Left lung (tissue), 14 donors: ENCODE measurements at regions of chr18 and their contacts with region 1.

Region 1: DNA sequence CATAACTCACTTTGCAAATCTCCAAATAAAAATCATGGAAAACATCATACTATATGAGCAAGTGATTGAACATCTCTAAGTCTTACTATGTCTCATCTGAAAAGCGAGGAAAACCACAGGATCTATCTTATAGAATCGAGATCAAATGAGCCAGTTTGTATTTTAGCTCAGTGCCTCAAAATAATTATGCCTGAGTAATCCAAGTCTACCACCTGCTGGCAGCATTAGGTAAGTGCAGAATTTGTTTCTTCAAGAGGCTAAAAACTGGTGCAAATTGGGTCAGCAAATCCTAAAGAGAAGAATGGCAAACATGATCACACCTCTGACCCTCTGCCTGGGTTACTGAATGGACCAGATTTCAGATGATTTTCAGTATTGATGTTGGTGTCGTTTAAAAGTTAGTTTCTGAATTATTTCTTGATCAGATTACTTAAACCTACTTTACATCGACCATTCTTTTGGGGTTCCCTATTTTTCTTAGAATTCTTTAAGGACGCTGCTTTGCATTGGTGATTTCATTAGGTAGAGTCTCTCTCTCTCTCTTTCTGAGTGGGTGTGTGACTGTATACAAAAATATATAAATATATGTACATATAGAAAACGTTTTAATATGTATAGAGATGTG is 12.7 kb upstream of the FHOD3 start:
- DNase-seq: peak in 2 of 4 donors; percentile 46 to 71
- ATAC-seq: peak; percentile 84
- H3K4me3 ChIP-seq: no peak overlapping the region
- H3K27ac ChIP-seq: no peak overlapping the region
- H3K4me1 ChIP-seq: no peaks in the 10 kb centered on the region
- H3K27me3 ChIP-seq: peaks cover 0 to 28% of the 10 kb centered on the region in 2 donors
- CTCF ChIP-seq: peak; percentile 72 to 76

Region 2: DNA sequence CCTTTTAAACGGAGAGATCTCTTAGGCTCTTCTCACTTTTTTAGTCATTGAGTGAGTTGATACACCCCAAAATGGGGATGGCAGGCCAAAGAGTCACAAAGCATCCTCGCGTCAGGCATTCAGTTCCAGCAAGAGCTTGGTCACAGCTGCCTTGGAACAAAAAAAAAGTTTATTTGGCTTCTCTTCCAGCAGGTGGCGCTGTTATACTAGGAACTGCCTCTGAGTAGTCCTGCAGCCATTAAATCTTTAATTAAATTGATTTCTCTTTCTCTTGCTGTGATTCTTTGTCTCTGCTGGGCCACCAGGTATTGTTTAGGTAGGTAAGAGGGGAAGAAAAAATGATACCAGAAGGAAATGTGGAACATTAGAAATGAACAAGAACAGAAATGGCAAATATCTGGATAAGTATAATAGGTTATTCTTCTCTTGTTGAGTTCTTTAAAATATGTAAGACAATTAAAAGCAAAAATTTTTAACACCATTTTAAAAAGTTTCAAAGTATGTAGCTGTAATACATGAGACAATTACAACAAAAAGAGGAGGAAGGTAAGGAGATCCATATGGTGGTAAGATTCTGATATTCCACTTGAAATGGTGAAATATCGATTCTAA is 528.2 kb before region 1 on chr18:
- intact Hi-C with region 1: loop called in 1 of 2 experiments (anchors 10 kb)
- DNase-seq: peak in 2 of 4 donors; percentile 40 to 70
- ATAC-seq: peak; percentile 87
- H3K4me3 ChIP-seq: no peak overlapping the region
- H3K27ac ChIP-seq: no peak overlapping the region
- H3K4me1 ChIP-seq: no peaks in the 10 kb centered on the region
- H3K27me3 ChIP-seq: no peaks in the 10 kb centered on the region
- CTCF ChIP-seq: peak; percentile 70 to 84

Region 3: DNA sequence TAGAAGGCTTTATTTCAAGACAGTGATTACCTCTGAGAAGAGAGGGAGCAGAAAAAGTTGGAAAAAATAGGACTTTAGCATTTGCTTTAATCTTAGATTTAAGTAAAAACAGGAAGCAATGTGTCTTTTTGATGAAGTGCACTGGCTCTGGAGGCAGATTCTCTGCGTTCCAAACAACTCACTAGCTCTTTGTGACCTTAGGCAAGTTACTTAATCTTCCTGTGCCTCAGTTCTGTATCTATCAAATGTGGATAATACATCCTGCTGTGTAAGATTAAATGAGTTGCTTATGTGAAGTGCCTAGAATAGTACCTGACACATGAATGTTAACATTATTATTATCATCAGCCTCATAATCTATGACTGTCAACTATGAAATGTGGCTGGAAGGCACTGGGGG is 259.8 kb before region 1 on chr18:
- intact Hi-C with region 1: loop called in 1 of 2 experiments (anchors 10 kb)
- DNase-seq: peak in 1 of 4 donors; percentile 19
- ATAC-seq: no peak
- H3K4me3 ChIP-seq: no peak overlapping the region
- H3K27ac ChIP-seq: no peak overlapping the region
- H3K4me1 ChIP-seq: no peaks in the 10 kb centered on the region
- H3K27me3 ChIP-seq: no peaks in the 10 kb centered on the region
- CTCF ChIP-seq: no peak

Region 4: DNA sequence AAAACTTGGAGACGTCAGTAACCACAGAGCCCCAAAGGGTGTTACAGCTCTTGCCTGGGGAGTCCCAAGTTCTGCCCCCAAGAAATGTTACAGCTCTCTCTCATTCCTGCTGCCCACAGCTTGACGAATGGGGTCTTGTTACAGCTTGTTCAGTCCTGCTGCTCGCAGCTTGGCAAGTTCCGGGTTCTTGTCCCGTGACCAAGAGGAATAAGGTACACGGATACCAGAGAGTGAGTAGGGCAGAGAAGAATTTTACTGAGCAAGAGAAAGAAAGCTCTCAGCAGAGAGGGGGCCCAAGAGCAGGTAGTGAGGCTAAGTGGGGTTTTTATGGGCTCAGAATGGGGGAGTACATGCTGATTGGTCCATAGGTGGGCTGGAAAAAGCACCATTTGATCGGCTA is 182.8 kb before region 1 on chr18:
- intact Hi-C with region 1: loop called in 1 of 2 experiments (anchors 10 kb)
- DNase-seq: no peak
- ATAC-seq: no peak
- H3K4me3 ChIP-seq: no peak overlapping the region
- H3K27ac ChIP-seq: no peak overlapping the region
- H3K4me1 ChIP-seq: no peaks in the 10 kb centered on the region
- H3K27me3 ChIP-seq: no peaks in the 10 kb centered on the region
- CTCF ChIP-seq: no peak

Region 5: DNA sequence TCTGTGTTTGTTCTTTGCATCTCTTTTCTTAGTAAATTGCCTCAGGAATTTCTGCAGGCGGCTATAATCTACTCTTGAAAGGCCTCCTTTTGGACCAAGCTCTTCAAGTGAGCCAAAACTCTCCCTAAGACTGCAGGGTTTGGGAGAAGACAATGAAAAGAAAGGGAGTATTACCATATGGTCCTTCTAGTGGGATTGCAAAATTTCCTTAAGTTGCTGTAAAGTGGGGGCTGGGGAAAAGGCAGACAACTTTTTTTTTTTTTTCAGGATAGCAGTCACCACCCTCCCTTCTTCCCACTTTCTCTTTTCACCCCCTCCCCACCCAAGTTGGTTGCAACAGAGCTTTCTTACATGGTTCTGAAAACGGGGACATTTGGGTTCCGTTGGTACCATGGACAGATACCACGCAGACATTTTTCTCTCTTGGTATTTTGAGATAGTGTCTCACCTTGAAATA is 196.4 kb after region 1 on chr18:
- intact Hi-C with region 1: no loop called
- DNase-seq: no peak
- ATAC-seq: no peak
- H3K4me3 ChIP-seq: no peak overlapping the region
- H3K27ac ChIP-seq: no peak overlapping the region
- H3K4me1 ChIP-seq: no peaks in the 10 kb centered on the region
- H3K27me3 ChIP-seq: no peaks in the 10 kb centered on the region
- CTCF ChIP-seq: no peak